Caco-2 (cell line): ENCODE measurements at regions of chr10 and their contacts with region 1.

Region 1: DNA sequence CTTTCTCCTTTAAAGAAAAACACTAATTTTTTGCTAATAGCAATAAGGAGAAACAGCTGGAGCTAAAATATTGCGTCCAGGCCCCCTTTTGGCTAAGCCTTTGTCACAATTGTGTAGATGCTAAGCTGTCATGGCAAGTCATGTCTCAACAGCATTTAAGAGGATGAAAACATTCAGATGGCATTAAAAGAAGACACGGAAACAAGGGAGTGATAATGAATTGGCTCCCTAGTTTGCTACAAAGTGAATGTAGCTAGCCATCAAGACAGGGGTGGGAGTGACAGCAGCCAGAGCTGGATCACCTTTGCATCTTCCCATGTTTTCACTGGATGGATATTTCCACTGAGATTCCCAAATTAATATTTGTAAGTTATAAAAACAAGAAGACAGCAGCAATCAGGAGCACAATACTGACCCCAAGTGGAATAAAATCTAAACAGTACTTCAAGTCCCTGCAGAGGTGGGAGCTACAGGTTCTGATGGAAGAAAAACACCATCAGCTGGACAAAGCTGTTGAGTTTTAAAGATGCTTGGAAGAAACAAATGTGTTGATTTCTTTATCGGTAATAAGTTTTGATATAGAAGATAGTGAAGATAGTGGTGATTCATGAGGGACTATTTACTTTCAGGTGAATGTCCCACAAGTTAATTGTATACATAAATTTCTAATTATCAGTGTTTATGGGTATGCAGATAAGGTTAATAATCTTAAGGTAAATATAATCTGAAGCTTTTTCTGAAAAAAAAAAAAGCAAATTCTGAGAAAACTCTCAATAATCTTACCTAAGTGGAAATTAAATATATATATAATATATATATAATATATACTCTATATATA is 129.4 kb downstream of the SLC16A9 start:
- DNase-seq: peak in 1 of 2 experiments; percentile 55
- H3K4me3 ChIP-seq: no peak overlapping the region
- H3K4me3 Mint-ChIP-seq: no peak overlapping the region
- H3K27ac Mint-ChIP-seq: no peak overlapping the region
- H3K4me1 ChIP-seq: no peaks in the 10 kb centered on the region
- H3K4me1 Mint-ChIP-seq: peaks cover 7% of the 10 kb centered on the region
- H3K27me3 ChIP-seq: no peaks in the 10 kb centered on the region
- H3K27me3 Mint-ChIP-seq: peaks cover 3% of the 10 kb centered on the region
- CTCF ChIP-seq: peak; percentile 79 to 82

Region 2: DNA sequence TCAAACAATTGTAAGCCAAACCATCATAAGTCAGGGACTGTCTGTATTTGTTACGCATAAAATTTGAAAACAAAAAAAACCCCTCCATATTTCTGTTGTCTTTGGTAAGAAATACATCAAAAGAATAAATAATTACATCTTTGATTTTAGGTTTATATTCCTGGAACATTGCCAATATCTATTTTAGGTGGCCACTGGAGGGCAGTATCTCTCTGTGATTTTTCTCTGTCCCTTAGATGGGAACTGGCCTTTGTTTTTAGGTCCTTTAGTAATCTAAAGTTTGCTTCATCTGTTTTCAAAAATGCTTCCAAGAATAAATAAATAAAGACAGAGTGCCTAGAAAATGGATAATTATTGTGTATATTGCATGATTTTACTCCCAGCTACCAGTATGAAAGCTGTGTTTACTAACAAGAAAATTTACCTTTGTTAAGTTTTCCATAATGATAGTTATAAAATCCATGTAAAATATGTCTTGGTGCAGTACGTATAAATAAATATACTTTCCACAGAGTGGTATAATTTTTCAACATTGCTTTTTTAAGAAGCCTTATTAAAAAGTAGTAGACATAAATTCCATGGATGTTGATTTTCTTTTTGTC is 339.6 kb before region 1 on chr10:
- CTCF ChIA-PET with region 1: no interaction called
- POLR2A ChIA-PET with region 1: no interaction called
- intact Hi-C with region 1: loop called (anchors 1 kb)
- DNase-seq: peak in 1 of 2 experiments; percentile 69
- H3K4me3 ChIP-seq: no peak overlapping the region
- H3K4me3 Mint-ChIP-seq: no peak overlapping the region
- H3K27ac Mint-ChIP-seq: no peak overlapping the region
- H3K4me1 ChIP-seq: no peaks in the 10 kb centered on the region
- H3K4me1 Mint-ChIP-seq: peaks cover 13% of the 10 kb centered on the region
- H3K27me3 ChIP-seq: no peaks in the 10 kb centered on the region
- H3K27me3 Mint-ChIP-seq: no peaks in the 10 kb centered on the region
- CTCF ChIP-seq: peak; percentile 82 to 89

Region 3: GRCh38 chr10:59387951-59388670 is 192.1 kb before region 1 on chr10:
- CTCF ChIA-PET with region 1: interaction called, 32 read pairs
- POLR2A ChIA-PET with region 1: no interaction called
- intact Hi-C with region 1: loop called (anchors 1 kb)
- DNase-seq: no peak
- H3K4me3 ChIP-seq: no peak overlapping the region
- H3K4me3 Mint-ChIP-seq: no peak overlapping the region
- H3K27ac Mint-ChIP-seq: no peak overlapping the region
- H3K4me1 ChIP-seq: no peaks in the 10 kb centered on the region
- H3K4me1 Mint-ChIP-seq: no peaks in the 10 kb centered on the region
- H3K27me3 ChIP-seq: no peaks in the 10 kb centered on the region
- H3K27me3 Mint-ChIP-seq: peaks cover 8% of the 10 kb centered on the region
- CTCF ChIP-seq: no peak

Region 4: DNA sequence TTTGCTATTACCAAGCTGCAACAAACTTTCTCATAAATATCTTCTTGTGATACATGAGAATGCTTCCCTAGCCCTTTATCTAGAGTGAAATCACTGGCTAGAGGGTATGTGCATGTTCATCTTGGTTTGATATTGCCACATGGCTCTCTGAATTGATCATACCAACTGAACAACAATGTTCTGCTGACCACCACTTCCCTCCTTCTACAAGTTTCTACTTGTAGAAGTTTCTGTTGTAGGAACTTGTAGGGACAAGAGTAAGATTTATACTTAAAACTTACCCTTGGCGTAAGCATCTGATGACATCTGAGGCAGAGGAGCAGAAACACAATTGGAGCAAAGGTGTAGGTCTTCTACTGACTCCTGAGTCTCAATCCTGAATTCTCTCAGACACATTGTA is 131.6 kb before region 1 on chr10:
- CTCF ChIA-PET with region 1: no interaction called
- POLR2A ChIA-PET with region 1: no interaction called
- intact Hi-C with region 1: no loop called
- DNase-seq: no peak
- H3K4me3 ChIP-seq: no peak overlapping the region
- H3K4me3 Mint-ChIP-seq: no peak overlapping the region
- H3K27ac Mint-ChIP-seq: no peak overlapping the region
- H3K4me1 ChIP-seq: no peaks in the 10 kb centered on the region
- H3K4me1 Mint-ChIP-seq: no peaks in the 10 kb centered on the region
- H3K27me3 ChIP-seq: no peaks in the 10 kb centered on the region
- H3K27me3 Mint-ChIP-seq: peaks cover 14% of the 10 kb centered on the region
- CTCF ChIP-seq: no peak

Region 5: DNA sequence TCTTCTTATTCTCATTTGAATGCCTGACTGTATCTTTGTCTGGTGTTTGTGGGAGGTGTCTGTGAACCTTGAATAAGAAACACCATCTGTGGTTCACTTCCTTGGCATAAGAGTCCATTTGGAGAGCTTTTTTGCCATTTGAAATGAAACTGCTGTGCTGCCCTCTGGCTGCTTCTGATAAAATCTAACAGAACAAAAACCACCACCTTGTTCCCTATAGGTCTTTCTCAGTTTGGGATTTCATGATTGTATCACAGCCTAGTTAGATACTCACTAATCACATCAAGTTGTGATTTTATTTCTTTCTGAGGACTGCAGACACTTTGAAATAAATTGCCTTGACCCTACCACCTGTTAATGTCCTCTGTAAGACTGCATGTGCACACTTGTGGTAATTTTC is 115.2 kb before region 1 on chr10:
- CTCF ChIA-PET with region 1: interaction called, 9 read pairs
- POLR2A ChIA-PET with region 1: no interaction called
- intact Hi-C with region 1: loop called (anchors 1 kb)
- DNase-seq: peak in 1 of 2 experiments; percentile 29
- H3K4me3 ChIP-seq: no peak overlapping the region
- H3K4me3 Mint-ChIP-seq: no peak overlapping the region
- H3K27ac Mint-ChIP-seq: no peak overlapping the region
- H3K4me1 ChIP-seq: no peaks in the 10 kb centered on the region
- H3K4me1 Mint-ChIP-seq: no peaks in the 10 kb centered on the region
- H3K27me3 ChIP-seq: no peaks in the 10 kb centered on the region; the same call in 1 of the 2 replicates
- H3K27me3 Mint-ChIP-seq: peaks cover 10% of the 10 kb centered on the region
- CTCF ChIP-seq: peak; percentile 25 to 57

Region 6: DNA sequence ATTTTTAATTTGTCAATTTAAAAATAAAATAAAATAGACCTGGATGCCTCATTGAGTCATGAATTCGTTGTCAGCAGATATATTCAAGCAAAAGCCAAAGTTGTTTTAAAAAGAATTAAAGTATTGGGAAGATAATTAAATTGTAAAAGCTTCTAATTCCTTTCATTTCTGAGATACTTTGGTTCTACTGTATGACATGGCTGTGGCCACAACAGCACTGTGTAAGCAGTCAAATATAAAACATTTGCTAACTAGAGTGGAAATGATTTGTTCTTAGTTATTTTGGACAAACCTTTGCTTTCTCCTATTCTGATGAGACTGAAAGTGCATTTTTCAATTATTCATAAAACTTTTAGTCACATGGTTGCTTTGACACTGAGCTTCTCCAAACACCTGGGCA is 74.3 kb before region 1 on chr10:
- CTCF ChIA-PET with region 1: interaction called, 5 read pairs
- POLR2A ChIA-PET with region 1: no interaction called
- intact Hi-C with region 1: loop called (anchors 2 kb)
- DNase-seq: no peak
- H3K4me3 ChIP-seq: no peak overlapping the region
- H3K4me3 Mint-ChIP-seq: no peak overlapping the region
- H3K27ac Mint-ChIP-seq: no peak overlapping the region
- H3K4me1 ChIP-seq: no peaks in the 10 kb centered on the region
- H3K4me1 Mint-ChIP-seq: no peaks in the 10 kb centered on the region
- H3K27me3 ChIP-seq: no peaks in the 10 kb centered on the region
- H3K27me3 Mint-ChIP-seq: peaks cover 18% of the 10 kb centered on the region
- CTCF ChIP-seq: no peak

Region 7: DNA sequence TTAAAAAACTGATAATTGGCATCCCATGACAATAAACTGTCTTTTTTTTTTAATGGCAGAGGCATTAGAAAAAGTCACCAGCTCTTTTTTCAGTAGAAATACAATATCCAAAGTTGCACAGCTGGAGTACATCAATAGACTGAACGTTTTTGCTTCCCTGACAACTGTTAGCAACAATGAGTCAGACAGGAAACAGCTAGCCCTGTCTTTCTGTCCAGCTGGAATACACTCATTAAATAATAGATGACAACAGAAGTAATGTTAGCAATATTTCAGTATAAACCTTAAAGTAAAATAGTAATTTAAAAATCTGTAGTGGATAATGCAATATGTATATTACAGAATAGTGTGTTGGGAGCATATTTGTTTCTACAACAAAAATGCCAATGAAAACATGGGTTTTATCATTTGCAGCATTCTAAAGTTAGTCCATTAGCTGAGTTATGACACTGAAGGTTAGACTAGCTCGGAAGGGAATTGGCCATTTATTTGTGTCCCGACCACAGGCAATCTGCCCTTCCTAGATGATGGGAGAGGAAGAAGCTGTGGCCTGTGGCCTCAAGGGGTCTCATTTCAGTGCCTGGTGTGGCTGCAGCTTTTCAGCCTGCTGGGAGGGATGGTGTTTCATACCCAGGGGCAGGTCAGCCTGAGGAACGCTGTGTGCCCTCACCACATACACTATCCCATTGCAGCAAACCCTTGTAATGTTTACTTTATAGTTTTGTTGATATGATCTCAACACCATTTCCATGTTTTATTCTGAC is 43.9 kb before region 1 on chr10:
- CTCF ChIA-PET with region 1: no interaction called
- POLR2A ChIA-PET with region 1: no interaction called
- intact Hi-C with region 1: no loop called
- DNase-seq: no peak
- H3K4me3 ChIP-seq: no peak overlapping the region
- H3K4me3 Mint-ChIP-seq: no peak overlapping the region
- H3K27ac Mint-ChIP-seq: no peak overlapping the region
- H3K4me1 ChIP-seq: no peaks in the 10 kb centered on the region
- H3K4me1 Mint-ChIP-seq: no peaks in the 10 kb centered on the region
- H3K27me3 ChIP-seq: no peaks in the 10 kb centered on the region
- H3K27me3 Mint-ChIP-seq: peaks cover 4% of the 10 kb centered on the region
- CTCF ChIP-seq: no peak

Region 8: DNA sequence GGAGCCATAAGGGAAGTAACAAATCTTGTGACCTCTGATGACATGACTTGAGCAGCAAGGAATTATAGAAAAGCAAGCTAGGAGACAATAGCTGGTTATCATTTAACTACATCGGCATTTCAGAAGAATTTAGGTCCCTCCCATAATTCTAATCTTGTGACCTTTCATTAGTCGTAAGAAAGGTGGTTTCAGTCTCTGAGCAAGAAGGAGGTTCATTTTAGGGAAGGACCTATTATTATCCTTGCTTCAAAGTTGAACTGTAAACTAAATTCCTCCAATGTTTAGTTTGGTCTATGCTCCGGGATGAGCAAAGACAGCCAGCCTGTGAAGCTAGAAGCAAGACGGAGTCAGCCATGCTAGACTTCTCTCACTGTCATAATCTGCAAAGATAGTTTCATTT is 30.2 kb before region 1 on chr10:
- CTCF ChIA-PET with region 1: interaction called, 3 read pairs
- POLR2A ChIA-PET with region 1: no interaction called
- intact Hi-C with region 1: loop called (anchors 2 kb)
- DNase-seq: peak in 1 of 2 experiments; percentile 74
- H3K4me3 ChIP-seq: no peak overlapping the region
- H3K4me3 Mint-ChIP-seq: peak overlapping the region; percentile 23
- H3K27ac Mint-ChIP-seq: peak overlapping the region; percentile 83
- H3K4me1 ChIP-seq: peaks cover 21% of the 10 kb centered on the region
- H3K4me1 Mint-ChIP-seq: peaks cover 15% of the 10 kb centered on the region
- H3K27me3 ChIP-seq: no peaks in the 10 kb centered on the region
- H3K27me3 Mint-ChIP-seq: no peaks in the 10 kb centered on the region
- CTCF ChIP-seq: no peak